Psoas muscle (tissue), 8 donors: ENCODE measurements at regions of chr16 and their contacts with region 1.

Region 1: DNA sequence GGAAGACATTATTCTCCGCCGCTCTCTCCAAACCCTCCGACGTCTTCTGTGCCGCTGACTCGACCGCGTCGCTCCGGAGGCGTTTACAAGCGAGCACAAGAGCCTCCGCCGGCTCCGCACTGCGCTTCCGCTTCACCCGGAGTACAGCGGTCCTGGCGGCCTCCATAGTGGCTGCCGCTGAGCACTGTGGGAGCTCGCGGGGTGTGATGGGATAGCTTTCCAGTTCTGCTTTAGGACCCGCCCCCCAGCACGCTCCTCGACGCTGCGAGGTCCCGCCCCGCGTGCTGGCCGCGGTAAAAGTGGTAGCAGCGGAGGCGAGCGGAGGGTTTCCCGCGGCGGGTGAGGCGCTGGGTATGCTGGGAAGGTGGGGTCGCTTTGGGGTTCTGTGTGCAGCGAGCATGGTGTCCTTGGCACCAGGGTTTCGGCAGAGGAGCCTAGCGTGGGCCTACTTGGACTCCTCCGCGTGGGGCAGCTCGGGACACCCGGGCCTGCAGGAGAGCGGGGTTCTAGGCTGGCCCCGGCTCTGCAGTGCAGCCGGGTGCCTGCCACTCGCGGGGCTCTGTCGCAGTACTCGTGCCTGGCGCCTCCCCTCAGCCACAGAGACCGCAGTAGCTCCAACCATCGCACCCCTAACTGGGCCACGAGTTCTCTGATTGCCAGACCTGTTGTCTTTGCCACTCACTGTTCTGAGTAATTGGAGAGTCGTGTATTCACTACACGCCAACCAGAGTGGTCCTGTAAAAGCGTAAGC is at the starts of genes PRMT7 and SLC7A6OS:
- DNase-seq: peak; percentile 91 to 94
- ATAC-seq: peak; percentile 98 to 99 (median 99)
- H3K4me3 ChIP-seq: peak within 1 kb of the TSS; percentile 96
- H3K27ac ChIP-seq: peak within 1 kb of the TSS; percentile 94
- H3K4me1 ChIP-seq: peaks cover 31% of the 10 kb centered on the region
- H3K27me3 ChIP-seq: no peaks in the 10 kb centered on the region
- CTCF ChIP-seq: peak; percentile 21
- total RNA-seq, gene PRMT7: 19.9 to 31.4 (median 26.6) TPM
- total RNA-seq, gene SLC7A6OS: 7.9 to 12.6 (median 9.9) TPM

Region 2: GRCh38 chr16:68074850-68075555 is 235.9 kb before region 1 on chr16:
- intact Hi-C with region 1: loop called in 1 of 2 experiments (anchors 10 kb)
- DNase-seq: no peak
- ATAC-seq: no peak
- H3K4me3 ChIP-seq: no peak overlapping the region
- H3K27ac ChIP-seq: peak overlapping the region; percentile 61
- H3K4me1 ChIP-seq: peaks cover 52% of the 10 kb centered on the region
- H3K27me3 ChIP-seq: no peaks in the 10 kb centered on the region
- CTCF ChIP-seq: no peak

Region 3: GRCh38 chr16:68116256-68116867 is 194.6 kb before region 1 on chr16:
- intact Hi-C with region 1: no loop called
- DNase-seq: no peak
- ATAC-seq: peak in 2 of 4 donors; percentile 30 to 41
- H3K4me3 ChIP-seq: no peak overlapping the region
- H3K27ac ChIP-seq: peak overlapping the region; percentile 4
- H3K4me1 ChIP-seq: peaks cover 38% of the 10 kb centered on the region
- H3K27me3 ChIP-seq: no peaks in the 10 kb centered on the region
- CTCF ChIP-seq: peak; percentile 50